Cardiac septum (tissue), 1 donor: ENCODE measurements at regions of chr17 and their contacts with region 1.

Region 1: GRCh38 chr17:78998311-78999055 is 11.1 kb downstream of the CANT1 start:
- DNase-seq: peak; percentile 81

Region 2: DNA sequence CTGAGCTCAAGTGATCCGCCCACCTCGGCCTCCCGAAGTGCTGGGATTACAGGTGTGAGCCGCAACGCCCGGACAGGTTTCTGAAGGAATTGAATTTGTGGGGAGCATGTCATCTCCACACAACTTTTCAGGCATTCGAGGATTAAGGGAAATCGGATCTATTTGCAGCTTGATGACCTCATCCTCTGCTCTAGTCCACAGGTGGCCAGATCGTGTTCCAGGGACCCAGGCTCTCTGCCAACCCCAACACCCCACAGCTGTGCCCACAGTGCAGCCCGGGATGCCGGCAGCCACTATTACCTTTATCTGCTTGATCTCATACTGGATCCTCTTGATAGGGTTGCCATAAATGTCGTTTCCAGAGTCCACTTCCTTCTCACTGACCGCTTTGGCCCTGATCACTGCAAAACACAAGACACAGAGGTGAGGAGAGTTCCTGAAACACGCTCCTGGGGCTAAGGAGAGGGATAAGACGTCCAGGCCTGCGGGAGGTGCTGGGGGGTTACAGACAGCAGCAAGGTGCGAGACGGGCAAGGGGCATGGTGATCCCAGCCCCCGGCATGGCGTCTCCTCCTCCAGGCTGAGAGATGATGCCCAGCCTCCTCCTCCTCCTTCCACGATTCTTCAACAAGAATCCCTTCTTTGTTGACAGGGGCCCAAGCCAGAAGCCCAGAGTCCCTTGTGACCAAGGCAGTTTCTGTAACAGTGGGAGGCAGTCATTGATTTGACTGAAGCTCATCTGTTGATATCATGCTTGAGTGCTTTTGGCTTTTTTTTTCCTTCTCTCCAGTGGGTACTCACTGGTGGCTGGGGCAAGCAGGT is 124.8 kb before region 1 on chr17:
- intact Hi-C with region 1: no loop called
- DNase-seq: no peak

Region 3: DNA sequence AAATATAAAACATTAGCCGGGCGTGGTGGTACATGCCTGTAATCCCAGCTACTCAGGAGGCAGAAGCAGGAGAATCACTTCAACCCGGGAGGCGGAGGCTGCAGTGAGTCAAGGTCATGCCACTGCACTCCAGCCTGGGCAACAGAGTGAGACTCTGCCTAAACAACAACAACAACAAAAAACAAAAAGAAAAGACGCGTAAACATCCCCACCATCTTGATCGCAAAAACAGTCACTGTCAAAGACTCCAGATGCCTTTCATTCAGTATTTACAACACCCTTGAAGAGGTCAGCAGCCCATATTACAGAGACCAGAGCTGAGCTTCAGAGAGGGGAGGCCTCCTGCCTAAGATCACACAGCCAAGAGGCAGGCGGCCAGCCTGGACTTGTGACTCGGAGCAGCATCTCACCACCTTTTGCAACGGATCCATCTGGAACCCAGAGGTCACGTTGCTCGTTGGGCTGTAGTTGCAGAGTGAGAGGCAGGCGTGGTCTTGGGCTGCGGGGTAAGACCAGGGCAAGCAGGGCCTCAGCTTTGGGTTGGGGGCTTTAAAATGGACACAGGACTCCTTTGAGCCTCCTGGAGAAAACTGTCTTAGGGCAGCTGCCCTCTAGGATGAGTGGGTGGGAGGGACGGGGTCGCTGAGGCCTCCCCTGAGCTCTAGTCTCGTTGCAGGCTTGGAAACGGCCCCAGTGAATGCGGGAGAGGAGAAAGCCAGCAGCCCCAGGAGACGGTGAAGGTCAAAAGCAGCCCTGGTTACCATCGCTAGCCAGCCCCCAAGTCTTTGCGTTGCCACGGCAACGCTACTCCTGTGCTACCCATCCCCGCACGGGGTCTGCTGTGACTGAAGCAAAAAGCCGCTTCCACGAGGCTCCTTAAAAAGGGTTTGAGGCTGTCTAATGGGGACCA is 44.9 kb before region 1 on chr17:
- intact Hi-C with region 1: no loop called
- DNase-seq: no peak

Region 4: GRCh38 chr17:79024901-79025739 is 26.6 kb after region 1 on chr17:
- intact Hi-C with region 1: loop called (anchors 1 kb)
- DNase-seq: peak; percentile 86

Region 5: GRCh38 chr17:79355165-79355564 is 356.7 kb after region 1 on chr17:
- intact Hi-C with region 1: no loop called
- DNase-seq: no peak